OCI-LY7 (cell line): ENCODE measurements at regions of chr5 and their contacts with region 1.

Region 1: DNA sequence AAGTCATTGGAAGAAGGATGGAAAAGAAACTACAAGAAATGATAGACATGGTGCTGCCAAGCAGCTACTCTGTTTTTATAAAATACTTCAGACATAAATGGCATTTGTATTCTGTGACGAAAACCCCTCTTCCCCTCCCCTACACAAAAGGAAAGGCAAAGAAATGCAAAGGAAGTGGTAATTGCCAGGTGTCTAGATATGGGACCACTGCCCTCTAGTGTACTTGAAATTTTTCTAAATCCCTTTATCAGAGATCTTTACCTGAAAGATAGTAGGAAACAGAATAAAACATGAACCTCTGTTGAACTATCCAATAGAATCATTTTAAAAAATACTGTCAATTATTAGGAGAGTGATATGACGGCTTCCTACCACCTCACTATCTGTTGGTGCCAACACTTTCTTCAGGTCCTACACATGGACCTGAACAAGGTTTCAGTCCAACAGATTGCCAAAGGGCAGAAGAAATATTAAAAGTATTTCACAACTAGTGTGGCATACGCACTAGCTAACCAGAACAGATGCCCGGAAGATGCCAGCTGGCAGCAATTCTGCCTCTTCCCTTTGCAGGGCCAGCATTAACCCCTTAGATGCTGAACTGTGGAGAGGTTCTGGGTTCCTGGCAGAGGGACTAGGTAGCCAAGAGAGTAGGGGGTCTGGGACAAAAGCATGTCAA is 104.1 kb downstream of the TSSK1B start:
- DNase-seq: peak; percentile 61
- H3K4me3 ChIP-seq: no peak overlapping the region
- H3K27ac ChIP-seq: no peak overlapping the region
- H3K4me1 ChIP-seq: peaks cover 4% of the 10 kb centered on the region
- CTCF ChIP-seq: peak; percentile 85

Region 2: GRCh38 chr5:112995764-112996618 is 334.7 kb before region 1 on chr5:
- CTCF ChIA-PET with region 1: interaction called, 3 read pairs
- POLR2A ChIA-PET with region 1: no interaction called
- intact Hi-C with region 1: loop called (anchors 2 kb)
- DNase-seq: peak; percentile 76
- H3K4me3 ChIP-seq: no peak overlapping the region
- H3K27ac ChIP-seq: no peak overlapping the region
- H3K4me1 ChIP-seq: no peaks in the 10 kb centered on the region
- CTCF ChIP-seq: peak; percentile 98

Region 3: GRCh38 chr5:113043491-113043931 is 287.2 kb before region 1 on chr5:
- CTCF ChIA-PET with region 1: no interaction called
- POLR2A ChIA-PET with region 1: interaction called, 3 read pairs
- intact Hi-C with region 1: loop called (anchors 1 kb)
- DNase-seq: peak; percentile 37
- H3K4me3 ChIP-seq: no peak overlapping the region
- H3K27ac ChIP-seq: no peak overlapping the region
- H3K4me1 ChIP-seq: peaks cover 18% of the 10 kb centered on the region
- CTCF ChIP-seq: peak; percentile 67

Region 4: GRCh38 chr5:113320273-113320780 is 10.3 kb before region 1 on chr5:
- CTCF ChIA-PET with region 1: no interaction called
- POLR2A ChIA-PET with region 1: no interaction called
- intact Hi-C with region 1: no loop called
- DNase-seq: no peak
- H3K4me3 ChIP-seq: no peak overlapping the region
- H3K27ac ChIP-seq: no peak overlapping the region
- H3K4me1 ChIP-seq: no peaks in the 10 kb centered on the region
- CTCF ChIP-seq: no peak